Left colon (tissue), 2 donors: ENCODE measurements at regions of chr6 and their contacts with region 1.

Region 1: GRCh38 chr6:149431905-149432775 is 32.1 kb downstream of the SUMO4 start:
- DNase-seq: peak; percentile 85 to 95
- ATAC-seq: peak; percentile 97

Region 2: GRCh38 chr6:149028767-149029405 is 403.3 kb before region 1 on chr6:
- intact Hi-C with region 1: loop called in 1 of 2 experiments (anchors 10 kb)
- DNase-seq: peak; percentile 46 to 63
- ATAC-seq: peak; percentile 86

Region 3: GRCh38 chr6:149082286-149082707 is 349.8 kb before region 1 on chr6:
- intact Hi-C with region 1: loop called (anchors 5 to 10 kb)
- DNase-seq: peak; percentile 76 to 92
- ATAC-seq: peak; percentile 87

Region 4: GRCh38 chr6:149941583-149942431 is 509.7 kb after region 1 on chr6 and contains the start of gene ULBP2:
- intact Hi-C with region 1: no loop called
- DNase-seq: peak; percentile 77 to 83
- ATAC-seq: peak; percentile 94
- total RNA-seq, gene ULBP2: 0.31 TPM in 1 of 2 donors, not detected in the other